Gastrocnemius medialis (tissue), 4 donors: ENCODE measurements at regions of chr5 and their contacts with region 1.

Region 1: DNA sequence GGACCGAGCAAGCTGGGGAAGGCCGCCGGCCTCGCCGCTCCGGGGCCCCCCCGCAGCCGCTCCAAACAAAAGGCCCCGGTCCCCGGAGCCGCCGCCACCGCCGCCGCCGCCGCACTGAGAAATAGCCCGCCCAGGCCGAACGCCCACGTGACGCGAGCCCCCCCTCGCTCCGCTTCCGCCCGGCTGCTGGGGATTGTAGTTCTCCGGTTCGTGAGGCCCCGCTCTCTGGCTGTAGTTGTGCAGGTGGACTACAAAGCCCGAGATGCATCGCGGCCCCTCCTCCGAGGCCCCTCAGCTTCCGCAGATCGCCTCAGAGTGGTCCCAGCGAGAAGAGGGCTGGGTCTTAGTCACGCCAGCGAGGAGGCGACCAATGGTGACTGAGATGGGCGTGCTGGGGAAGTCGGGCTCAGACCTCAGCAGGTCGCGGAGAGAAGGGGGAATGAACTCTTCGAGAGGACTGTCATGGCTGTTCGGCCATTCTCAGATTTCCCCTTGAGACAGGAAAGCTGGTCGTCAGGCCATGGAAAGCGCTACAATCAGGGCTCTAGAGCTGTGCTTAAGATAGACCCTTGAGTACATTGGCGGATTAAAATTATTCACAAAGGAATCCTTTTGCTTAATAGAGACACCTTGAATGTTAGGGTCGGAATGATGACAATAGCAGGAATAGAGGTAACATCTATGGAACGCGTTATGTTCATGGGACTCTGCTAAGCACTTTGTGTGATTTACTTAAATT is 489 bp upstream of the PANK3 start:
- DNase-seq: peak; percentile 98 to 99
- ATAC-seq: peak; percentile 95 to 96
- H3K4me3 ChIP-seq: peak overlapping the region; percentile 82 to 100 (median 90)
- H3K27ac ChIP-seq: peak overlapping the region; percentile 95 to 99 (median 96)
- H3K4me1 ChIP-seq: peaks cover 17 to 34% of the 10 kb centered on the region in 2 donors
- H3K27me3 ChIP-seq: no peaks in the 10 kb centered on the region
- CTCF ChIP-seq: no peak
- POLR2A ChIP-seq: peak; percentile 95 to 96

Region 2: GRCh38 chr5:168486136-168486879 is 93.3 kb before region 1 on chr5 and contains the start of gene RARS1:
- in situ Hi-C with region 1: no loop called
- intact Hi-C with region 1: loop called (anchors 1 kb)
- DNase-seq: peak; percentile 84 to 88
- ATAC-seq: peak; percentile 98 to 99
- H3K4me3 ChIP-seq: peak within 1 kb of the TSS; percentile 70 to 97 (median 91)
- H3K27ac ChIP-seq: peak within 1 kb of the TSS; percentile 69 to 77 (median 71)
- H3K4me1 ChIP-seq: peaks cover 8 to 10% of the 10 kb centered on the region in 2 donors
- H3K27me3 ChIP-seq: no peaks in the 10 kb centered on the region
- CTCF ChIP-seq: peak; percentile 81 to 95 (median 91)
- POLR2A ChIP-seq: peak; percentile 54 to 76
- total RNA-seq, gene RARS1: 45.9 to 65.5 (median 52.7) TPM